ENCODE measurements at regions of chr6 and their contacts with region 1.

Region 1: GRCh38 chr6:2037237-2037926 is 208.0 kb downstream of the GMDS start:
- DNase-seq: no peak
- ATAC-seq: no peak
- H3K4me3 ChIP-seq: no peak overlapping the region
- H3K27ac ChIP-seq: no peak overlapping the region
- H3K4me1 ChIP-seq: peaks cover 6 to 10% of the 10 kb centered on the region in 2 experiments; a peak in 3 of 4 replicates
- H3K27me3 ChIP-seq: no peaks in the 10 kb centered on the region
- CTCF ChIP-seq: peak in 1 of 3 experiments; percentile 10; a peak in 1 of 6 replicates
- POLR2A ChIP-seq: no peak
- RAD21 ChIP-seq: peak; percentile 43; the same call in 1 of the 2 replicates

Region 2: GRCh38 chr6:1227935-1228753 is 809.2 kb before region 1 on chr6:
- CTCF ChIA-PET with region 1: no interaction called
- POLR2A ChIA-PET with region 1: no interaction called
- RAD21 ChIA-PET with region 1: no interaction called
- intact Hi-C with region 1: no loop called
- DNase-seq: no peak
- ATAC-seq: no peak
- H3K4me3 ChIP-seq: no peak overlapping the region
- H3K27ac ChIP-seq: no peak overlapping the region
- H3K4me1 ChIP-seq: no peaks in the 10 kb centered on the region
- H3K27me3 ChIP-seq: peaks cover 19% of the 10 kb centered on the region; the same call in 1 of the 2 replicates
- CTCF ChIP-seq: no peak
- POLR2A ChIP-seq: no peak
- RAD21 ChIP-seq: no peak

Region 3: DNA sequence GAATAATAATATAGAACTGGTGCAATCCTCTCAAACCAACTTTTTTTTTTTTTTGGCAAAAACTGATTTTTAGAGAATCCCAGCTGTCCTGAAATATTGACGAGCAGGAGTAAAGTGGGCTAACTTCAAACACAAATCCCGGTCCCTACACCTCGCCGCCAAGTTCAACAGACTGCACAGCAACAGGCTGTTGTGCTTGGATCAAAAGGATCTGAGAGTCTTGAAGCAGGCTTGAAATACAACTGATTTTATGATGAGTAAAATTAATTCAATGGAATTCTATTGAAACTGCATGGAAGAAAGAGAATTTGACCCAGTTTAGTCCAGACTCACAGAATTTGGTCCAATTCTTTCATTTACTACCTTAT is 255.6 kb before region 1 on chr6:
- CTCF ChIA-PET with region 1: interaction called, 14 read pairs
- POLR2A ChIA-PET with region 1: interaction called, 5 read pairs
- RAD21 ChIA-PET with region 1: interaction called in 1 of 2 experiments, 4 read pairs
- intact Hi-C with region 1: no loop called
- DNase-seq: peak; percentile 48
- ATAC-seq: peak; percentile 77
- H3K4me3 ChIP-seq: no peak overlapping the region
- H3K27ac ChIP-seq: peak overlapping the region; percentile 57; the same call in 1 of the 2 replicates
- H3K4me1 ChIP-seq: peaks cover 17 to 26% of the 10 kb centered on the region in 2 experiments; a peak in 3 of 4 replicates
- H3K27me3 ChIP-seq: no peaks in the 10 kb centered on the region
- CTCF ChIP-seq: no peak
- POLR2A ChIP-seq: no peak
- RAD21 ChIP-seq: no peak

Region 4: GRCh38 chr6:1930356-1930755 is 107.0 kb before region 1 on chr6:
- CTCF ChIA-PET with region 1: no interaction called
- POLR2A ChIA-PET with region 1: no interaction called
- RAD21 ChIA-PET with region 1: no interaction called
- intact Hi-C with region 1: no loop called
- DNase-seq: no peak
- ATAC-seq: no peak
- H3K4me3 ChIP-seq: no peak overlapping the region
- H3K27ac ChIP-seq: no peak overlapping the region
- H3K4me1 ChIP-seq: no peaks in the 10 kb centered on the region
- H3K27me3 ChIP-seq: no peaks in the 10 kb centered on the region
- CTCF ChIP-seq: no peak
- POLR2A ChIP-seq: no peak
- RAD21 ChIP-seq: no peak